CD8-positive, alpha-beta memory T cell (primary cell): ENCODE measurements at regions of chr5 and their contacts with region 1.

Region 1: DNA sequence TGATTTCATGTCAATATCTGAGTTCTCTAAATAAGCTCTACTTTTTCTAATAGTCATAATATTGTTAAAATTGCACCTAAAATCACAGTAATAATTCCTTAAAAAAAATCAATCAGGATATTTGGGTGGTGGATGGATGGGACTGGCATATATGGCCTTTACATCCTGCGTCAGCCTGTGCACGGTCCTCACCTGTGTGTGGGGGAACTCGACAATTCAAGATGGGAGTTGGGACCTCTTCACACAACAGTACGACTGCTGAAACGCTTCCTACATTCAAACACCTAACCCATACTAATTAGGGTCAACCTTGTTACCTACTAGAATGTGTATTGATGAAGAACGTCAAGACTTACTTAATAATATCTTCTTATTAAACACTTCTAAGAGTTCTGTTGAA is 90.5 kb downstream of the OSMR start:
- DNase-seq: no peak
- H3K4me3 ChIP-seq: no peak overlapping the region
- H3K4me3 Mint-ChIP-seq: no peak overlapping the region
- H3K27ac ChIP-seq: no peak overlapping the region
- H3K27ac Mint-ChIP-seq: no peak overlapping the region
- H3K4me1 ChIP-seq: no peaks in the 10 kb centered on the region
- H3K4me1 Mint-ChIP-seq: no peaks in the 10 kb centered on the region
- H3K27me3 ChIP-seq: no peaks in the 10 kb centered on the region
- H3K27me3 Mint-ChIP-seq: no peaks in the 10 kb centered on the region

Region 2: GRCh38 chr5:40374853-40375252 is 1438.6 kb after region 1 on chr5:
- CTCF ChIA-PET with region 1: no interaction called
- POLR2A ChIA-PET with region 1: interaction called, 13 read pairs
- DNase-seq: no peak
- H3K4me3 ChIP-seq: no peak overlapping the region
- H3K4me3 Mint-ChIP-seq: no peak overlapping the region
- H3K27ac ChIP-seq: no peak overlapping the region
- H3K27ac Mint-ChIP-seq: no peak overlapping the region
- H3K4me1 ChIP-seq: peaks cover 23% of the 10 kb centered on the region
- H3K4me1 Mint-ChIP-seq: peaks cover 21 to 34% (median 23%) of the 10 kb centered on the region in 3 donors
- H3K27me3 ChIP-seq: no peaks in the 10 kb centered on the region
- H3K27me3 Mint-ChIP-seq: no peaks in the 10 kb centered on the region